T-cell (primary cell): ENCODE measurements at regions of chrX and their contacts with region 1.

Region 1: DNA sequence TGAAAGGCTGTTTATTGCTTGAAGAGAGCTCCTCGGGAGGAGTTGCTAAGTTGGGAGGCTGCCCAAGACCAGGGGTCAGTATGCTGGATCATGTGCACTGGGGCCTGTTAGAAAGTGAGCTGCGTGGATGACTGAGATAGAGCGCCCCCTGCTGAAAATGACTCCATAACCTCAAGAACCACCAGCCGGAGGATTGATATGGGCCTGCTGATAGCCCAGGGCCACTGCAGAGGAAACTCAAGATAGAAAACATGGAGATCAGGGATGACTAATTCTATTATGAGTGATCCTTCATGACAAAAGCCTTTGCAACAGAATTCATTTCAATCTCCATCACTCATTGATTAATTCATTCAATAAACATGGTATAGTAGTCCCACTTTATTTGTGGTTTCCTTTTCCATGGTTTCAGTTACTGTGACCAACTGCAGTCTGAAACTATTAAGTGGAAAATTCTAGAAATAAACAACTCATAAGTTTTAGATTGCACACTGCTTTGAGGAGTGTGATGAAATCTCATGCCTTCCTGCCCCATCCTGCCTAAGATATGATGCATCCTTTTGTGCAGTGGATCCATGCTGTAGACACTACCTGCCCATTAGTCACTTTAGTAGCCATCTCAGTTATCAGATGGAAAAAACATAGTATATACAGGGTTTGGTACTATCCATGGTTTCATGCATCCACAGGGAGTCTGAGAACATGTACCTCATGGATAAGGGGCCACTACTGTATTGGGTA is 126.7 kb upstream of the MBNL3 start:
- DNase-seq: peak in 29 of 35 experiments; percentile 0 to 67 (median 21)
- ATAC-seq: peak in 2 of 4 experiments; percentile 45 to 48
- H3K4me3 ChIP-seq: no peak overlapping the region
- H3K4me3 Mint-ChIP-seq: no peak overlapping the region
- H3K27ac ChIP-seq: no peak overlapping the region
- H3K27ac Mint-ChIP-seq: no peak overlapping the region
- H3K4me1 ChIP-seq: no peaks in the 10 kb centered on the region
- H3K4me1 Mint-ChIP-seq: no peaks in the 10 kb centered on the region
- H3K27me3 ChIP-seq: no peaks in the 10 kb centered on the region
- H3K27me3 Mint-ChIP-seq: peaks cover 0 to 5% of the 10 kb centered on the region in 2 donors

Region 2: GRCh38 chrX:131841496-131842410 is 773.8 kb before region 1 on chrX:
- CTCF ChIA-PET with region 1: interaction called in 1 of 2 experiments, 10 read pairs
- POLR2A ChIA-PET with region 1: no interaction called
- DNase-seq: peak in 20 of 35 experiments; percentile 3 to 70 (median 22)
- ATAC-seq: peak in 3 of 4 experiments; percentile 72 to 75 (median 75)
- H3K4me3 ChIP-seq: peak overlapping the region in 1 of 2 donors; percentile 10
- H3K4me3 Mint-ChIP-seq: no peak overlapping the region
- H3K27ac ChIP-seq: no peak overlapping the region
- H3K27ac Mint-ChIP-seq: no peak overlapping the region
- H3K4me1 ChIP-seq: peaks cover 0 to 8% of the 10 kb centered on the region in 2 experiments
- H3K4me1 Mint-ChIP-seq: peaks cover 5 to 9% (median 5%) of the 10 kb centered on the region in 3 donors
- H3K27me3 ChIP-seq: peaks cover 0 to 4% of the 10 kb centered on the region in 2 experiments
- H3K27me3 Mint-ChIP-seq: peaks cover 0 to 23% of the 10 kb centered on the region in 2 donors

Region 3: DNA sequence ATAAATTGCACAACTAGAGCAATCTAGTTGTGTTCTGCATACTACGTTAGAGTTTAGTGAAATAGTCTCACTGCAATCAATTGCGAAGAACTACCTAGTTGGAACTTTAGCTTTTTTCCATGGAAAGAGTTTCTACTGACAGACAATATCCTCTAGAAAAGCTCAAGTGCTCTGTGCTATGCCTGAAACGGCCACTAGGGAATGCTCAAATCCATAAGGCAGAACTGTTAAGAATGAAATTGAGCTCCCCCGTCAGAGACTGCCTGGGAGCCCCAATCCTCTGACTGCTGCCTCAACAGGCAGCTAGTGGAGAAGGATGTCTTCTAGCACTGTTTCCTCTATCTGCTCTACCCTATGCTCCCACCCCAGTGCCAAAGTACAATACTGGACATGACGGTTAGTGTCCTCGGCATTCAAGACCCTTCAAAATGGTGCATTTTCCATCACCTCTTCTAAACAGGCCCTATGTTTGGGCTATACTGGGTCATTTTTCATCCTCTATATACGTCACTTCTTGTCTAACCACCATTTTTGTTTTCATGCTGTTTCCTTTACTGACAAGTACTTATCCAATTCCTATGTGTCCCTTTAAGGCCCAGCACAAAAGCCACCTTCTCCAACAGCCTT is 523.0 kb before region 1 on chrX:
- CTCF ChIA-PET with region 1: interaction called, 3 to 10 read pairs
- POLR2A ChIA-PET with region 1: no interaction called
- DNase-seq: peak; percentile 7 to 72 (median 31)
- ATAC-seq: peak; percentile 52 to 79 (median 64)
- H3K4me3 ChIP-seq: no peak overlapping the region
- H3K4me3 Mint-ChIP-seq: no peak overlapping the region
- H3K27ac ChIP-seq: no peak overlapping the region
- H3K27ac Mint-ChIP-seq: no peak overlapping the region
- H3K4me1 ChIP-seq: no peaks in the 10 kb centered on the region
- H3K4me1 Mint-ChIP-seq: peaks cover 0 to 9% (median 2%) of the 10 kb centered on the region in 3 donors
- H3K27me3 ChIP-seq: no peaks in the 10 kb centered on the region
- H3K27me3 Mint-ChIP-seq: peaks cover 4 to 40% of the 10 kb centered on the region in 2 donors

Region 4: DNA sequence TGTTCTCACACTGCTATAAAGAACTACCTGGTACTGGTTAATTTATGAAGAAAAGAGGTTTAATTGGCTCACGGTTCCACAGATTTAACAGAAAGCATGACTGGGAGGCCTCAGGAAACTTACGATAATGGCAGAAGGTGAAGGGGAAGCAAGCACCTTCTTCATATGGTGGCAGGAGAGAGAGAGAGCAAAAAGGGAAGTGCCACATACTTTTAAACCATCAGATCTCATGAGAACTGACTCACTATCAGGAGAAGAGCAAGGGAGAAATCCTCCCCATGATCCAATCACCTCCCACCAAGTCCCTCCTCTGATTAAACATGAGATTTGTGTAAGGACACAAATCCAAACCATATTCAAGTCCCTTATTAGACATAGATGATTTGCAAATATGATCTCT is 384.0 kb before region 1 on chrX:
- CTCF ChIA-PET with region 1: interaction called, 6 to 10 read pairs
- POLR2A ChIA-PET with region 1: no interaction called
- DNase-seq: no peak
- ATAC-seq: no peak
- H3K4me3 ChIP-seq: no peak overlapping the region
- H3K4me3 Mint-ChIP-seq: no peak overlapping the region
- H3K27ac ChIP-seq: no peak overlapping the region
- H3K27ac Mint-ChIP-seq: no peak overlapping the region
- H3K4me1 ChIP-seq: no peaks in the 10 kb centered on the region
- H3K4me1 Mint-ChIP-seq: peaks cover 0 to 13% (median 11%) of the 10 kb centered on the region in 3 donors
- H3K27me3 ChIP-seq: no peaks in the 10 kb centered on the region
- H3K27me3 Mint-ChIP-seq: peaks cover 0 to 29% of the 10 kb centered on the region in 2 donors

Region 5: GRCh38 chrX:132292793-132293192 is 322.8 kb before region 1 on chrX:
- CTCF ChIA-PET with region 1: interaction called, 10 to 21 read pairs
- POLR2A ChIA-PET with region 1: no interaction called
- DNase-seq: peak in 24 of 35 experiments; percentile 0 to 66 (median 8)
- ATAC-seq: peak in 1 of 4 experiments; percentile 53
- H3K4me3 ChIP-seq: no peak overlapping the region
- H3K4me3 Mint-ChIP-seq: no peak overlapping the region
- H3K27ac ChIP-seq: no peak overlapping the region
- H3K27ac Mint-ChIP-seq: no peak overlapping the region
- H3K4me1 ChIP-seq: no peaks in the 10 kb centered on the region
- H3K4me1 Mint-ChIP-seq: peaks cover 0 to 4% (median 3%) of the 10 kb centered on the region in 3 donors
- H3K27me3 ChIP-seq: no peaks in the 10 kb centered on the region
- H3K27me3 Mint-ChIP-seq: peaks cover 0 to 9% of the 10 kb centered on the region in 2 donors

Region 6: GRCh38 chrX:132594129-132594528 is 21.4 kb before region 1 on chrX:
- CTCF ChIA-PET with region 1: no interaction called
- POLR2A ChIA-PET with region 1: no interaction called
- DNase-seq: no peak
- ATAC-seq: no peak
- H3K4me3 ChIP-seq: no peak overlapping the region
- H3K4me3 Mint-ChIP-seq: no peak overlapping the region
- H3K27ac ChIP-seq: no peak overlapping the region
- H3K27ac Mint-ChIP-seq: no peak overlapping the region
- H3K4me1 ChIP-seq: no peaks in the 10 kb centered on the region
- H3K4me1 Mint-ChIP-seq: no peaks in the 10 kb centered on the region
- H3K27me3 ChIP-seq: no peaks in the 10 kb centered on the region
- H3K27me3 Mint-ChIP-seq: peaks cover 0 to 21% of the 10 kb centered on the region in 2 donors